Activated CD4-positive, alpha-beta T cell treated with anti-CD3 and anti-CD28 coated beads for 36 hours (primary cell): ENCODE measurements at regions of chr15 and their contacts with region 1.

Region 1: DNA sequence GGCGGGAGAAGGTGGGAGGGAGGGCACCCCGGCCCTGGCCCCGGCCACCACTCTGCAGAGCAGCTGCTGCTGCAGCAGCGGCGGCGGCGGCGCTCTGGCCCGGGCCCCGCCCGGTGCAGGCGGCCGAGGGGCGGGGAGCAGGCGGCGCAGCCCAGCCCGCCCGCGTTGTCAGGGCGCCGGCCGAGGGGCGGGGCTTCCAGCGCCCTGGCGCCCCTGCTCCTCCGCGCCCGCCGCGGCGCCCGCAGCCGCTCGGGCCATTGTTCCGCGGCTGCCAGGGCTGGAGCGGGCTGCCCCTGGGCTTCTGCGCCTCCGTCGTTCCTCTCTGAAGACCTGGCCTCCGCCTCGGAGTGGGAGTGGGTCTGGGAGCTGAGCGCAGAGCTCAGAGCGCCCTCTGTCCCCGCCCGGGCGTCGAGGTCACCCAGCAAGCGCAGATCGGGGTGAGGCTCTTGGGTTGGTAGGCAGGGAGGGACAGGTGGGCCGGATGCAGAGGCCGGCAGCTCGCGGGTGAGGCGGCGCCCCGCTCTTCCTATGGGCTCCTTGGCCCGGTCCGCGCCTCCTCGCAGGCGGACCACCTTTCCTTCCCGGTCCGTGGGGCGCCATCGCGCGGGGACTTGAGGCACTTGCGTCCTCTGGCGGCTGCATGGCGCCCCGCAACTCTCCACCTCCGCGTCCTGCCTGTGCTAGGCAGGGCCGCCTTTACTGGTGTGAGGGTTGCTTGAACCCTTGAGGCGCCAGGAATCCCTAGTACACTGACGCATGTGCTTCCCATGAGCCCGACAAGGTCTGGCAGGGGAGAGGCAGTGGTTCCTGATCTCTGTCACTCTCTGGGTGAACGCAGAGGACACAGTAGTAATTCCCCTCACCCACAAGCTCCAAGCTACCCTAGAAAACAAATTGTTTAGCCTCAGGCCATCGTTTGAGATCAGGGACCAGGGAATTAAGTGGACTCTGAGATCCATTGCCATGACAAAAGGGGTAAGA is at the start of gene LPCAT4:
- DNase-seq: peak; percentile 94
- ATAC-seq: peak; percentile 84
- H3K4me3 Mint-ChIP-seq: peak within 1 kb of the TSS; percentile 99
- H3K27ac Mint-ChIP-seq: peak within 1 kb of the TSS; percentile 89
- H3K4me1 Mint-ChIP-seq: peaks cover 36% of the 10 kb centered on the region
- H3K27me3 Mint-ChIP-seq: no peaks in the 10 kb centered on the region
- total RNA-seq, gene LPCAT4: 44.4 to 52.7 TPM

Region 2: DNA sequence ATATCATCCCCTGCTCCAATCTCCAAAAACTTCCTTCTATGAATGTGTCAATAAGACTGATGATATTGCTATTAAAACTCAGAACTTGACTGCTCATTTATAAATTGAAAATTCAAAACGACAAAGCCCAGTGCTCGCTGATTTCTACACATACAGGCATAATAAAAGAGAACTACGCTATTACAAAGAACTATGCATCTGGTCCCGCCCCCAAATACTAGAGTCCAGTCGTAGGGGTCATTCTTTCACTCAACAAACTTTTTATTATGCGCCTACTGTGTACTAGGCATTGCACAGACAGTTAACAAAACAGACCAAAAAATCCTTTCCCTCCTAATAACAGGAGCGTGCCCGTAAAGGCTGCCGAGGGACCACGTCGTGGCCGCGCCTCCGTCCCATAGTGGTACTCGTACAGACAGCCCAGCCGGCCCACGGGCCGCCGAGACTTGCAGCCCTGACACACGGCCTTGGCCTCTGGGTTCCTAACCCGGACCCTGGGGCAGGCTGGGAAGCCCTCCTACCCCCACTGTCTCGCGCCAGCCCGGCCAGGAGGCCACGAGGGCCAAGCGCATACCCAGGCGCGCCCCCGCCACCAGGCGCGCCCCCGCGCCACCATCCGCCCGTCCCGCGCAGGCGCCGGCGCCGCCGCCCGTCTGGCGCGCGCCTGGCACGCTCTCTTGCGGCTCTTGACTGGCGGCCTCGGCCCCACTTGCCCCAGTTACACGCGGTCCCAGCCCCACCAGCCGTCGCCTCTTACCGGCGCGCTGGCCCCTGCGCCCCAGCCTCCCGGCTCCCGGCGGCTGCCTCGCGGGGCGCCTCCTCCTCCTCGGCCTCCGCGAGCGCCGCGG is 329.1 kb before region 1 on chr15:
- CTCF ChIA-PET with region 1: interaction called, 3 read pairs
- POLR2A ChIA-PET with region 1: no interaction called
- intact Hi-C with region 1: loop called in 1 of 2 experiments (anchors 1 kb)
- DNase-seq: peak; percentile 88
- ATAC-seq: peak; percentile 76
- H3K4me3 Mint-ChIP-seq: peak overlapping the region; percentile 81
- H3K27ac Mint-ChIP-seq: peak overlapping the region; percentile 96
- H3K4me1 Mint-ChIP-seq: peaks cover 23% of the 10 kb centered on the region
- H3K27me3 Mint-ChIP-seq: no peaks in the 10 kb centered on the region

Region 3: GRCh38 chr15:34065941-34066340 is 301.4 kb before region 1 on chr15:
- CTCF ChIA-PET with region 1: interaction called, 12 read pairs
- POLR2A ChIA-PET with region 1: no interaction called
- intact Hi-C with region 1: loop called in 1 of 2 experiments (anchors 1 kb)
- DNase-seq: no peak
- ATAC-seq: no peak
- H3K4me3 Mint-ChIP-seq: no peak overlapping the region
- H3K27ac Mint-ChIP-seq: no peak overlapping the region
- H3K4me1 Mint-ChIP-seq: peaks cover 6% of the 10 kb centered on the region
- H3K27me3 Mint-ChIP-seq: no peaks in the 10 kb centered on the region

Region 4: GRCh38 chr15:34109797-34110663 is 257.4 kb before region 1 on chr15:
- CTCF ChIA-PET with region 1: interaction called, 13 read pairs
- POLR2A ChIA-PET with region 1: no interaction called
- intact Hi-C with region 1: no loop called
- DNase-seq: no peak
- ATAC-seq: peak; percentile 60
- H3K4me3 Mint-ChIP-seq: no peak overlapping the region
- H3K27ac Mint-ChIP-seq: no peak overlapping the region
- H3K4me1 Mint-ChIP-seq: no peaks in the 10 kb centered on the region
- H3K27me3 Mint-ChIP-seq: peaks cover 2% of the 10 kb centered on the region

Region 5: DNA sequence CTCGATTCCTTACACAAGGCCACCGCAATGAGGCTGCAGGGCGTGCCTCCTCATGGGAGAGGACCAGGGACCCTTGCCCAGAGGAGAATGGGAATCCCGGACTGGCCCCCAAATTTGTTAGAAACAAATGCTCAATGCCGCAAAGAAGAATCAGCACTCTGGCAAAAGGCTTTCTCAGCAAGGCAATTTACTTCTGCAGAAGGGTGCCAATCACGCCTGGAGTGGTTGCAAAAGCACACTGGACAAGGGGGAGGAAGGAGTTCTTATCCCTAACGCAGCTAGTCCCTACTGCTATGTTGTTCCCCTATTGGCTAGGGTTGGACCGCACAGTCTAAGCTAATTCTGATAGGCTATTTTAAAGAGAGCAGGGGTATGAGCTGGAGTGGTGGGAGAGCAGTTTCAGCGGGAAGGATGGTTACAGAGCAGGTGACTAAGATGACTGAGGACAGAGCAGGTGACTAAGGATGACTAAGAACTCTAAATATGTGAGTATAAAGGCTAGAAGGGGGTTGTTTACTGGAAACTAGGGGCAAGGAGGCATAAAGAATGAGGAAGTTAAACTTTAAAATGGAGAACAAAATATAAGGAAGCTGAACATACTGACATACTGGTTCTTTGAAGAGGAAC is 205.9 kb before region 1 on chr15:
- CTCF ChIA-PET with region 1: no interaction called
- POLR2A ChIA-PET with region 1: no interaction called
- intact Hi-C with region 1: no loop called
- DNase-seq: peak; percentile 14
- ATAC-seq: peak; percentile 60
- H3K4me3 Mint-ChIP-seq: no peak overlapping the region
- H3K27ac Mint-ChIP-seq: peak overlapping the region; percentile 15
- H3K4me1 Mint-ChIP-seq: peaks cover 5% of the 10 kb centered on the region
- H3K27me3 Mint-ChIP-seq: no peaks in the 10 kb centered on the region

Region 6: GRCh38 chr15:34223904-34224596 is 143.3 kb before region 1 on chr15:
- CTCF ChIA-PET with region 1: interaction called, 10 read pairs
- POLR2A ChIA-PET with region 1: interaction called, 4 read pairs
- intact Hi-C with region 1: loop called (anchors 1 to 2 kb)
- DNase-seq: peak; percentile 23
- ATAC-seq: peak; percentile 10
- H3K4me3 Mint-ChIP-seq: peak overlapping the region; percentile 90
- H3K27ac Mint-ChIP-seq: peak overlapping the region; percentile 96
- H3K4me1 Mint-ChIP-seq: peaks cover 17% of the 10 kb centered on the region
- H3K27me3 Mint-ChIP-seq: no peaks in the 10 kb centered on the region

Region 7: DNA sequence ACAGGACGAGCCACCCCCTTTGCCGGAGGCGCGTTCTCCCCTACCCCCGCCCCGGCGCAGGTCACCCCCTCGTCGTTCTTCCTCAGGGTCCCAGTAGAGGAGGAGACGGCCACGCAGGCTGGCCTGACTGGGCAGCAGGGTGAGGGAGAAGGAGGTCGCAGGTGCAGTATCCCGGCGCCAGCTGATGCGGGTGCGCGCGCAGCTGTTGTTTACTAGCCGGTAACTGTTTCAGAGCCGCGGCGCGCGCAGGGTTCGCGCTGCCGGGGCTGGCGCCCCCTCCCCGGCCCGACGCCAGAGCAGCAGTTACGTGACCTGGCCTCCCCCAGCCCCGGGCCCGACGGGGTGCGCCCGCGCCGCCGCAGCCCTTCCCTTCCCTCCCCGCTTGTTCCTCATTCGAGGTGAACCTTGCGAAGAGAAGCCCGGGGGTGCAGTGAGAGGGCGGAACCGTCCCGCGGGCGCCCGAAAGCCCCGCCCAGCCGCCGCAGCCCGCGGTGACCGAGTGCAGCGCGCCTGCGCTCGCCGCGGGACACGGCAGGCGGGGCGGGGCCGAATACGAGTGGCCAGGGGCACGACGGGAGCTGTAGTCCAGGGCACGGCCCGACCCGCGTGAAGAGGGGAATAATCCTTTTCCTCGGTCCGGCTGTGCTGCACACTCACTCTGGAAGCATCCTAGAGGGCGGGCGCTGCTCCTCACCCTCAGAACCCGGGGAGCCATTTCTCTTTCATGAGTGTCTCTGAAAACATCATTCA is 29.7 kb before region 1 on chr15 and contains the start of gene SLC12A6:
- CTCF ChIA-PET with region 1: interaction called, 29 read pairs
- POLR2A ChIA-PET with region 1: interaction called, 3 read pairs
- intact Hi-C with region 1: loop called in 1 of 2 experiments (anchors 1 kb)
- DNase-seq: peak; percentile 95
- ATAC-seq: peak; percentile 82
- H3K4me3 Mint-ChIP-seq: peak within 1 kb of the TSS; percentile 83
- H3K27ac Mint-ChIP-seq: peak within 1 kb of the TSS; percentile 97
- H3K4me1 Mint-ChIP-seq: peaks cover 67% of the 10 kb centered on the region
- H3K27me3 Mint-ChIP-seq: no peaks in the 10 kb centered on the region
- total RNA-seq, gene SLC12A6: 18.2 to 22.1 TPM

Region 8: GRCh38 chr15:34437687-34438086 is 70.3 kb after region 1 on chr15 and contains the start of gene GOLGA8A:
- CTCF ChIA-PET with region 1: interaction called, 4 read pairs
- POLR2A ChIA-PET with region 1: interaction called, 3 read pairs
- intact Hi-C with region 1: loop called (anchors 1 to 2 kb)
- DNase-seq: peak; percentile 94
- ATAC-seq: peak; percentile 85
- H3K4me3 Mint-ChIP-seq: peak within 1 kb of the TSS; percentile 86
- H3K27ac Mint-ChIP-seq: peak within 1 kb of the TSS; percentile 95
- H3K4me1 Mint-ChIP-seq: peaks cover 18% of the 10 kb centered on the region
- H3K27me3 Mint-ChIP-seq: peaks cover under 1% of the 10 kb centered on the region
- total RNA-seq, gene GOLGA8A: 147 to 165 TPM

Region 9: DNA sequence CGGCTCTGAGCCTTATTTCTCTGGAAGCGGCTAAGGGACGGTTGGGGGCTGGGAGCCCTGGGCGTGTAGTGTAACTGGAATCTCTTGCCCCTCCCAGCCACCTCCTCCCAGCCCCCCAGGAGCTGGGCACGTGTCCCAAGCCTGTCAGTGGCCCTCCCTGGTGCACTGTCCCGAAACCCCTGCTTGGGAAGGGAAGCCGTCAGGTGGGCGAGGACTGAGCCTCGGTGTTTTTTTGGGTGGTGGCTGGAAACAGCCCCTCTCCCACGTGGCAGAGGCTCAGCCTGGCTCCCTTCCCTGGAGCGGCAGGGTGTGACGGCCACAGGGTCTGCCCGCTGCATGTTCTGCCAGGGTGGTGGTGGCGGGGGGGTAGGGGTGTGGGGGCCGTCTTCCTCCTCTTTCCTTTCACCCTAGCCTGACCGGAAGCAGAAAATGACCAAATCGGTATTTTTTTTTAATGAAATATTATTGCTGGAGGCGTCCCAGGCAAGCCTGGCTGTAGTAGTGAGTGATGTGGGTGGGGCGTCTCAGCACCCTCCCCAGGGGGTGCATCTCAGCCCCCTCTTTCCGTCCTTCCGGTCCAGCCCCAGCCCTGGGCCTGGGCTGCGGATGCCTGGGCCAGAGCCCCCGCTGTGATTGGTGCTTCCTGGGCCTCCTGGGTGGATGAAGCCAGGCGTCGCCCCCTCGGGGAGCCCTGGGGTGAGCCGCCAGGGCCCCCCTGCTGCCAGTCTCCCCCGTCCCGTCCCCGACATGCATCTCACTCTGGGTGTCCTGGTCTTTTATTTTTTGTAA is 129.0 kb after region 1 on chr15:
- CTCF ChIA-PET with region 1: no interaction called
- POLR2A ChIA-PET with region 1: no interaction called
- intact Hi-C with region 1: no loop called
- DNase-seq: no peak
- ATAC-seq: no peak
- H3K4me3 Mint-ChIP-seq: no peak overlapping the region
- H3K27ac Mint-ChIP-seq: no peak overlapping the region
- H3K4me1 Mint-ChIP-seq: peaks cover 7% of the 10 kb centered on the region
- H3K27me3 Mint-ChIP-seq: peaks cover 61% of the 10 kb centered on the region

Region 10: DNA sequence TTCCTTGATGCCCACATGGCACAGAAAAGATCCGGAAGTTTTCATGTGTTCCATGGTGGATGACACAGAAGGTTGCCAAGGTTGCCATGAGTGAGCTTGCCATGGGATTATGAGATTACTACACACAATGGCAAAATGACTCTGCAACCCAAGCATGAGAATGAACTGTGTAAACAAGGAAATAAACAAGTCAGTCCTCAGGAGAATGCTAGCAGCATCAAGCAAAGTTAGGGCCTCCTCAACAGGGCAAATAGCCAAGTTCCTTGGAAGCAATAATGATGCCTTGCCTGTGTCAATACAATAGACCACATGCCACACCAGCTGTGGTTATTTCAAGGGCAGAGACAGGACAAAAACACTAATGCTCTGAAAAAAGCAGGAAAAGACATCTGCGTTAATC is 560.3 kb after region 1 on chr15:
- CTCF ChIA-PET with region 1: no interaction called
- POLR2A ChIA-PET with region 1: no interaction called
- intact Hi-C with region 1: no loop called
- DNase-seq: no peak
- ATAC-seq: no peak
- H3K4me3 Mint-ChIP-seq: no peak overlapping the region
- H3K27ac Mint-ChIP-seq: no peak overlapping the region
- H3K4me1 Mint-ChIP-seq: no peaks in the 10 kb centered on the region
- H3K27me3 Mint-ChIP-seq: no peaks in the 10 kb centered on the region